Common myeloid progenitor, CD34-positive (primary cell): ENCODE measurements at regions of chr11 and their contacts with region 1.

Region 1: GRCh38 chr11:30346068-30346688 is 23.3 kb downstream of the ARL14EP start:
- DNase-seq: peak; percentile 70 to 86 (median 81)
- H3K4me3 ChIP-seq: no peak overlapping the region
- H3K27ac ChIP-seq: no peak overlapping the region
- H3K4me1 ChIP-seq: peaks cover 0 to 9% (median 5%) of the 10 kb centered on the region in 4 experiments
- H3K27me3 ChIP-seq: no peaks in the 10 kb centered on the region

Region 2: GRCh38 chr11:30333405-30333804 is 12.8 kb before region 1 on chr11:
- CTCF ChIA-PET with region 1: interaction called, 14 read pairs
- POLR2A ChIA-PET with region 1: no interaction called
- DNase-seq: peak; percentile 20 to 26 (median 26)
- H3K4me3 ChIP-seq: no peak overlapping the region
- H3K27ac ChIP-seq: no peak overlapping the region
- H3K4me1 ChIP-seq: no peaks in the 10 kb centered on the region
- H3K27me3 ChIP-seq: no peaks in the 10 kb centered on the region

Region 3: DNA sequence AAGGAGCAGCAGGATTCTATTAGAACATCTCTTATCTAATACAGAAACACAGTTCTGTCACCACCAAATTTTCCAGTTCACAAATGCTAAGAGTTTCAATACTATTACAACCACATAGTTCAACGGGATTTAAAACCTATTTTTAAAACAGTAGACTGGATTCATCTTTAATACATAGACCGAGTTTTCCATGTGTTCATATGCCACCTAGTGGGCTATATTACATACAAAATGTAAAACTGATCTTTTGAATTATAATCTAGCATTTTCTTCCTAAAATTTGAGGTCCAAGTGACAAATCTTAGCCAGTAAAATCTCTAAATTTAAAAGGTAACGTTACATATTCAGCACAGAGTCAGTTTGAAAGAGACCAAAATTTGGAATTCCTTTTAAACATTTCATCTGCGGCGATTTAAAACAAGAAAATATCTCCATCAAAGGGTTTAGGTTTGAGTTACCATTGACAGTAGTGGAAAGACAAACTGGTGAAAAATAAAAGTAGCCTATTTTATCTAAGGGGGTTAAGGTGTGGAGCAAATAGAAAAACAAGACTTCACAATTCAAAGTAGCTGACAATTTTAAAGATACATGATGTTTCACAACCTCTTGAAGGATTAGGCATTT is 509.3 kb after region 1 on chr11:
- CTCF ChIA-PET with region 1: interaction called, 15 read pairs
- POLR2A ChIA-PET with region 1: no interaction called
- DNase-seq: peak; percentile 15 to 42 (median 39)
- H3K4me3 ChIP-seq: no peak overlapping the region
- H3K27ac ChIP-seq: no peak overlapping the region
- H3K4me1 ChIP-seq: no peaks in the 10 kb centered on the region
- H3K27me3 ChIP-seq: peaks cover 0 to 2% (median 0%) of the 10 kb centered on the region in 5 experiments

Region 4: DNA sequence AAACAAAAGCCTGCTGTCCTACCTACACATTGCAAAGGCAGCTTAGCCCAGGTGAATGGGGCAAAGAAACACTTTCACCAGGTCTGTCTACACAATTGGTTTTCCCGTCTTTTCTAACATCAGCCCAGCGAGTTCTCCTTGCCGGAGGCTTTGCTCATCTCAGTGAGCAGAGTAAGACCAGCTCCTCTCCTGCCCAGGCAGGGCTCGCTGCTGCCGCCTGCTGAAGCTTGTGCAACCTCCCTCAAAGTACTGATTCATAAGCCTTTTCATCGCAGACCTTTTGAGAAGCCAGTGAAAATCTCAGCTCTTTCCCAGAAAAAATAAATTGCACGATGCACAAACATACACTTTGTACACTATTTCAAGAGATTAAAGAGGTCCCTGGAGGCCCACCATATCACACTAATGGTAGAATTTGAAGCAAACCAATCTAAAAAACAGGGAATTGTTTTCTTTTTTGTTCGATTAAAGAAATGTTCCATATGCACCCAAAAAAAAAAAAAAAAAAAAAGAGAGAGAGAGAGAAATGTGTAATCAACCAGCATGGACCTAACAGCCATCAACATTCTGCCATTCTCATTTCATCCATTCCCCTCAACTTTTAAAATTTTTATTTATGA is 568.1 kb after region 1 on chr11:
- CTCF ChIA-PET with region 1: interaction called, 15 read pairs
- POLR2A ChIA-PET with region 1: no interaction called
- DNase-seq: peak; percentile 13 to 53 (median 41)
- H3K4me3 ChIP-seq: no peak overlapping the region
- H3K27ac ChIP-seq: no peak overlapping the region
- H3K4me1 ChIP-seq: no peaks in the 10 kb centered on the region
- H3K27me3 ChIP-seq: peaks cover 0 to 16% (median 4%) of the 10 kb centered on the region in 5 experiments